Right cardiac atrium (tissue), 5 donors: ENCODE measurements at regions of chr11 and their contacts with region 1.

Region 1: GRCh38 chr11:34161812-34162499 is 56.5 kb downstream of the NAT10 start:
- DNase-seq: peak in 1 of 3 donors; percentile 19
- ATAC-seq: peak in 1 of 2 donors; percentile 6
- H3K4me3 ChIP-seq: no peak overlapping the region
- H3K27ac ChIP-seq: no peak overlapping the region
- H3K4me1 ChIP-seq: no peaks in the 10 kb centered on the region
- H3K27me3 ChIP-seq: no peaks in the 10 kb centered on the region

Region 2: GRCh38 chr11:34002268-34002807 is 159.6 kb before region 1 on chr11:
- intact Hi-C with region 1: loop called in 1 of 4 experiments (anchors 10 kb)
- DNase-seq: no peak
- ATAC-seq: no peak
- H3K4me3 ChIP-seq: no peak overlapping the region
- H3K27ac ChIP-seq: no peak overlapping the region
- H3K4me1 ChIP-seq: no peaks in the 10 kb centered on the region
- H3K27me3 ChIP-seq: no peaks in the 10 kb centered on the region

Region 3: DNA sequence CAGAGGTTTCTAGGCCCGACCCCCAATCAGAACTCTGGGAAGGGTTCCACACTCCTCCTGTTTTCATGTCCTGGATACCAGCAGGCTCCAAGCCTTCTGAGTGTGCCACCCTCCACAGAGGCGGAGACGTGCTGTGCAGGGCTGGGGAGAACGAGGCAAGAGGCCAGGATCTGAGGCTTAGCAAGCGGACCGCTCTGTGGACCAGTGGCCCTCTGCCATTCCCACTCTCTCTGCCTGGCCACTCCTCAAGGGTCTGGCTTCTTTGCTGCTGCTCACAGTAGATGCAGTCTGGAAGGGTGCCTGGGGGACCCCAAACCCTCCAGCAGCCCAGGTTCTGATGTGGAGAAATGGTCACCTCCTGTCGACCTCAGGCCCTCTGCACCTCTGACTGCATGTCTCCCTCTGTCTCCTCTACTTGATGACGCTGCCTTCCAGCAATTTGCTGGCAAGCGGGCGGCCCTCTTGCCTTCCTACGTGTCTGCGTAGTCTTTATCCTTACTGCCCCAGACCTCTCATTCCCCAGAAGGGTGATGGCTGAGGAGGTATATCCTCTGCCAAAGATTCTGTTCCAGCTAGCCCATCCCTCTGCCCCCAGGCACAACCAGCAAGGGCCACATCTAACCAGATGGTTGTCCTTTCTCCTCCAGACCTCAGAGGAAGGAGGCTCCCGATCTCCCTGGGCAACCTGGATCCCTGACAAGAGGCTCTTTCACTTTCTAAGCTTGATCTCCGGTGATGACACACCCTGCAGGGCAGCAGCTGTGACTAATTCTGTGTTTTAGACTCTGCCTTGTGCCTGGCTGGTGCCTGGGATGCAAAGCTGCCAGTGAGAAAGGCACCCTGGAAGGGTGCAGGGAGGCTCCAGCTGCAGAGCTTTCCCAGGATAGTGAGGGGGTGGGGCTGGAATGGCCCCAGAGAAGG is 30.8 kb after region 1 on chr11:
- intact Hi-C with region 1: no loop called
- DNase-seq: peak; percentile 85 to 94 (median 91)
- ATAC-seq: peak; percentile 84 to 91
- H3K4me3 ChIP-seq: no peak overlapping the region
- H3K27ac ChIP-seq: peak overlapping the region; percentile 43
- H3K4me1 ChIP-seq: no peaks in the 10 kb centered on the region
- H3K27me3 ChIP-seq: no peaks in the 10 kb centered on the region